Activated T-helper 2 cell treated with anti-CD3 and anti-CD28 coated beads, Interferon-gamma antibody, Interleukin-2, Interleukin-4, amounts not matched to agents 10 μg/mL and 5 μg/mL and 100 μg/mL, durations not matched to agents 14 hours and 24 hours and 36 hours (primary cell): ENCODE measurements at regions of chr11 and their contacts with region 1.

Region 1: GRCh38 chr11:87917111-87917510 is 258.1 kb downstream of the RAB38 start:
- DNase-seq: no peak
- H3K4me3 Mint-ChIP-seq: no peak overlapping the region
- H3K27ac Mint-ChIP-seq: no peak overlapping the region
- H3K4me1 Mint-ChIP-seq: no peaks in the 10 kb centered on the region
- H3K27me3 Mint-ChIP-seq: no peaks in the 10 kb centered on the region

Region 2: GRCh38 chr11:87859583-87860149 is 57.4 kb before region 1 on chr11:
- intact Hi-C with region 1: no loop called
- DNase-seq: no peak
- H3K4me3 Mint-ChIP-seq: no peak overlapping the region
- H3K27ac Mint-ChIP-seq: no peak overlapping the region
- H3K4me1 Mint-ChIP-seq: no peaks in the 10 kb centered on the region
- H3K27me3 Mint-ChIP-seq: no peaks in the 10 kb centered on the region

Region 3: DNA sequence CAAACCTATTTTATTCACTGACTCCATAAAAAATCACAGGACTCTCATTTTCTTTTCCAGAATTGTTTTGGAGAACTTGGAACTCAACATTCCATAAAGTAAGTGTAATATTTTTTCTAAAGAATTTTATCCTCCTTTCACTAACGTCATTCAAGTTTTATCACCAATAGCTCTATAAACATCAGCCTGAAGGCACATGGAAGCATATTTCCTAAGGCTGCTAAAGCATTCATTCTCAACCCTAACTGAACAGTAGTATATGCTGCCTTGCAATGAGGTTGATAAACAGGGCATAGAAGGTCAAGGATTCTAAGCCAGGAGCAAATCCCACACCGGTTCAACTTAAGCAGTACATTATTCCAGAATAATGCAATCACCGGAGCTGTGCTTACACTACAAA is 15.8 kb before region 1 on chr11:
- intact Hi-C with region 1: loop called (anchors 1 kb)
- DNase-seq: no peak
- H3K4me3 Mint-ChIP-seq: no peak overlapping the region
- H3K27ac Mint-ChIP-seq: no peak overlapping the region
- H3K4me1 Mint-ChIP-seq: no peaks in the 10 kb centered on the region
- H3K27me3 Mint-ChIP-seq: peaks cover 2% of the 10 kb centered on the region

Region 4: DNA sequence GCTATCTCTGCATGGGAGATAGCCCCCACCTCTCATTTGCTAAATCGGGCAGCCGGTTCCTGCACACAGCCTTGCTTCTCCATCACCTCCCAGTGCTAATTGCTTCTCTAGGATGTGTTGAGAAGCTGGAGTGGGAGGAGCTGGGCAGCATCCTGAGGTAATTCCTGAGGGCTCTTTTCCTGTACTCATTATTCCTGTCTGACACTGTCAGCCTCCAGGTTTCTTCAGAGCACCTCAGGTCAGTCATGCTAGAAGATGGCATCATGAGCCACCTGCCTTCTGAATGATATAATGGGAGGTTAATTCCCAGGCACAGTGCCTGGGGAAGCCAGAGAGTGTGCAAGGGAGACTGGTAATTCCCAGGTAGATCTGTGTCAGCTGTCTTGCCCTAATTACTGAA is 125.1 kb after region 1 on chr11:
- intact Hi-C with region 1: no loop called
- DNase-seq: no peak
- H3K4me3 Mint-ChIP-seq: no peak overlapping the region
- H3K27ac Mint-ChIP-seq: no peak overlapping the region
- H3K4me1 Mint-ChIP-seq: no peaks in the 10 kb centered on the region
- H3K27me3 Mint-ChIP-seq: peaks cover 5% of the 10 kb centered on the region

Region 5: DNA sequence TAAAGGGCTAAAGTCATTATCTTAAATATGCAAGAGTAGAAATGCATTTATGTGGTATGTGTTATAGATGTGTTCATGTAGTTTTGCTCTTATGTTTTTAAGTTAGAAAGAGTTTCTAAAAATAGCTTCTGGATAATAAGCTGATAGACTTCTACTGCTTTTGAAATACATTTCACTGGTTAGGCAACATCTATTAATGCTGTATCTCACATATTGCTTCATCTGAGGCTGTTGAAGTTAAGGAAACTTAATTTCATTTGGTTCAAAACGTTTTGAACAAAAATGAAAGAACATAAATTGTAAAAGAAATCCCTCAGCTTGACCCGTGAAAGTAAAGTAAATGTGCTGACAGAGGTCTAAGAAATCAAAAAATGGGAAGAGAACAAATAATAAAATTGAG is 584.4 kb after region 1 on chr11:
- intact Hi-C with region 1: no loop called
- DNase-seq: no peak
- H3K4me3 Mint-ChIP-seq: no peak overlapping the region
- H3K27ac Mint-ChIP-seq: no peak overlapping the region
- H3K4me1 Mint-ChIP-seq: no peaks in the 10 kb centered on the region
- H3K27me3 Mint-ChIP-seq: peaks cover 50% of the 10 kb centered on the region